AG04449 (cell line): ENCODE measurements at regions of chr4 and their contacts with region 1.

Region 1: DNA sequence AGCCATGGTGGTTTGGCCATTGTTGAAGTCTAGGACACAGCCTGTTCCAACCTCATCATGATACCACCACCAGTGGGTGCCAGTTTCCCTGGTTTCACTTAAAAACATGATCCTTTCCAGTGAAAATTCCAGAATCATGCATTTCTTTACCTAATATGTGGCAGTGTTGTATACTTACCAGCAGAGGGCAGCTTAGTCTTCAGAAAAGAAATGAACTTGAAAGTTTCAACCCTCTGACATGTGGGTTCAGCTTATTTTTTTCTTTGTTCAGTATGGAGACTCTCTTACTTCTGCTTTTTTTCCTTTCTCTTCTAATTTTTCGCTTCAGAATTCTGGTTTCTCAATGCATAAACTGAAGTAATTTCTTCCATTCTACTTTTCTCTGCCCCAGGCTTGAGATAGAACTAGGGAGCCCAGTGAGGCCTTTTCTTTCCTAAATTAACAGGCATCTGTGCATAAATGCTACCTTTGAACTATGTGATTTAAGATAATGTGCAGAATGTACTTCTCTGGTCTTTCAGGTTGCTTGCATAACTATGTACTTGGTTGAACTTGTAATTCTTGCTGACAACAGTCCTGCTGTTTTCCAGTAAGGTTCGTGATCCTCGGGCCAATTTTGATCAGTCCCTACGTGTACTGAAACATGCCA is 10.7 kb downstream of the LIAS start:
- DNase-seq: peak; percentile 67
- H3K4me3 ChIP-seq: no peak overlapping the region
- CTCF ChIP-seq: peak; percentile 61

Region 2: DNA sequence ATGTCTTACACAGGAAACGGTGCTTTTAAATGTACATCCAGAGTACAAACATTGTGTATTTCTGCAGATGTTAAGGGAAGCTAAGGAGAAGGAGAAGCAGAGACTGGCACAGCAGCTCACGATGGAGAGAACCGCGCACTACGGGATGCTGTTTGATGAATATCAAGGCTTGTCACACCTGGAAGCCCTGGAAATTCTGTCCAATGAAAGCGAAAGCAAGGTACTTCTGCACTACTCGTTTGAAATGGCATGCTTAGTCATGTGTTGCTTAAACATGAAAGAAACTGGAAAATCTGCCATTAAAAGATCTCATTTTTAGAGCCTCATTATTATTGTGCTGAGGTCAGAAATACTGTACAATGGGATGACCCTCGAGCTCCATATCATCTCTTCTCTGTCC is 554.7 kb before region 1 on chr4:
- CTCF ChIA-PET with region 1: no interaction called
- POLR2A ChIA-PET with region 1: no interaction called
- DNase-seq: no peak
- H3K4me3 ChIP-seq: no peak overlapping the region
- CTCF ChIP-seq: no peak

Region 3: GRCh38 chr4:39383690-39384089 is 85.9 kb before region 1 on chr4:
- CTCF ChIA-PET with region 1: no interaction called
- POLR2A ChIA-PET with region 1: no interaction called
- DNase-seq: no peak
- H3K4me3 ChIP-seq: no peak overlapping the region
- CTCF ChIP-seq: no peak

Region 4: DNA sequence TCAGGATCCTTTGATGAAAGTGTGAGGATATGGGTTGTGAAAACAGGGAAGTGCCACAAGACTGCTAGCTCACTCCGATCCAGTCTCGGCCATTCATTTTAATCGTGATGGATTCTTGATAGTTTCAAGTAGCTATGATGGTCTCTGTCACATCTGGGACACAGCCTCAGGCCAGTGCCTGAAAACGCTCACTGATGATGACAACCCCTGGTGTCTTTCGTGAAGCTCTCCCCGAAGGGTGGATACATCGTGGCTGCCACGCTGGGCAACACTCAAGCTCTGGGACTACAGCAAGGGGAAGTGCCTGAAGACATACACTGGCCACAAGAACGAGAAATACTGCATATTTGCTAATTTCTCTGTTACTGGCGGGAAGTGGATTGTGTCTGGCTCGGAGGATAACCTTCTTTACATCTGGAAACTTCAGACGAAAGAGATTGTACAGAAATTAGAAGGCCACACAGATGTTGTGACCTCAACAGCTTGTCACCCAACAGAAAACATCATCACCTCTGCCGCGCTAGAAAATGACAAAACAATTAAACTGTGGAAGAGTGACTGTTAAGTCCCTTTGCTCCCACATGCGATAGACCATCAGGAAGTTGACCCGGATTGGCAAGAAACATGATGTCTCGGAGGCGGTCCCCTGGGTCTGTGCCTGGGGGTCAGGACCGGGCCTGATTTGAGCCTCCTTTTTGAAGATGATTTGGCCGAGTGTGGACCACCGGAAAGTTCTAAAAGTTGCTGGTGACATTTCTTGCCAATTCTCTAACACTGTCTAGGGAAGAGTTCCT is 11.5 kb after region 1 on chr4:
- CTCF ChIA-PET with region 1: interaction called, 14 read pairs
- POLR2A ChIA-PET with region 1: no interaction called
- DNase-seq: no peak
- H3K4me3 ChIP-seq: no peak overlapping the region
- CTCF ChIP-seq: no peak

Region 5: DNA sequence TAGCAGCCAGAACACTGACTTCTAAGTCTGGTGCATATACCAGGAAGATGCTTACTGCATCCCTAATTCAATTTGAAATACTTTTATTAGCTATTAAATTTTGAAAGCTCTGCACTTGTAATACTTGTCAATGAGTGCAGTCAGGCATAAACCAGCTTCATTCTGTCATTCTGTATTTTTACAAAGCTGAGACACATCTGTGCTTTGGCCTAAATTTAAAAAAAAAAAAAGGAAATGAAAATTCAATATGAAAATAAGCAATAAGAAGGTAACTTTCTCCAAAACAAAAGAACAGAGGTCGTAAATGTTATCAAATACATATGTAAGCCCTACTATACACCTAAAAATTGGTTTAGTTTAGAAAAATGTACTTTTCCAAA is 162.1 kb after region 1 on chr4:
- CTCF ChIA-PET with region 1: interaction called, 53 read pairs
- POLR2A ChIA-PET with region 1: no interaction called
- DNase-seq: no peak
- H3K4me3 ChIP-seq: no peak overlapping the region
- CTCF ChIP-seq: no peak

Region 6: GRCh38 chr4:39658756-39659155 is 189.2 kb after region 1 on chr4:
- CTCF ChIA-PET with region 1: interaction called, 57 read pairs
- POLR2A ChIA-PET with region 1: no interaction called
- DNase-seq: no peak
- H3K4me3 ChIP-seq: no peak overlapping the region
- CTCF ChIP-seq: no peak